ENCODE measurements at regions of chr4 and their contacts with region 1.

Region 1: GRCh38 chr4:90824266-90825195 is 697.3 kb downstream of the CCSER1 start:
- DNase-seq: no peak
- ATAC-seq: no peak
- H3K4me3 ChIP-seq: no peak overlapping the region
- H3K27ac ChIP-seq: no peak overlapping the region
- H3K4me1 ChIP-seq: no peaks in the 10 kb centered on the region
- H3K27me3 ChIP-seq: no peaks in the 10 kb centered on the region
- CTCF ChIP-seq: no peak
- POLR2A ChIP-seq: no peak
- RAD21 ChIP-seq: no peak

Region 2: GRCh38 chr4:90780193-90780592 is 44.3 kb before region 1 on chr4:
- CTCF ChIA-PET with region 1: no interaction called
- POLR2A ChIA-PET with region 1: no interaction called
- dilution Hi-C with region 1: no loop called
- in situ Hi-C with region 1: no loop called
- intact Hi-C with region 1: loop called (anchors 2 kb)
- DNase-seq: no peak
- ATAC-seq: no peak
- H3K4me3 ChIP-seq: no peak overlapping the region
- H3K27ac ChIP-seq: no peak overlapping the region
- H3K4me1 ChIP-seq: no peaks in the 10 kb centered on the region
- H3K27me3 ChIP-seq: no peaks in the 10 kb centered on the region
- CTCF ChIP-seq: no peak
- POLR2A ChIP-seq: no peak
- RAD21 ChIP-seq: no peak

Region 3: DNA sequence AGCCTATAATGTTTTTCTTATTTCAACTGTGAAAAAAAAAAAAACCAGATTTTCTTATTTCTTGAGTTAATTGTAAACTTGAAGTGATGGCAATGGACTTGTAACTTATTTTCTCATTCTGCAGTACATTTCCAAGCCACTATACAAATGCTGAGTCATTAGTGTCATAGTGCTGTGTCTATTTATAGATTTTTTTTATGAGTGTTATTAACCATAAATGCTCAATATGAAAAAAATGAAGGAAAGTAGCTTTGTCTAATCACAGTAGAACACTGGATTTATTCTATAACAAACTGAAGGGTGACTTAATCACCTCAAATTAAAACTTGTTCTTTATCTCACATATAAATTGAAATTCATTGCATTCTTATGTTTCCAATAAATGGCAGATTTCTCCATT is 21.2 kb after region 1 on chr4:
- CTCF ChIA-PET with region 1: no interaction called
- POLR2A ChIA-PET with region 1: no interaction called
- dilution Hi-C with region 1: no loop called
- in situ Hi-C with region 1: no loop called
- intact Hi-C with region 1: no loop called
- DNase-seq: no peak
- ATAC-seq: no peak
- H3K4me3 ChIP-seq: no peak overlapping the region
- H3K27ac ChIP-seq: no peak overlapping the region
- H3K4me1 ChIP-seq: no peaks in the 10 kb centered on the region
- H3K27me3 ChIP-seq: no peaks in the 10 kb centered on the region
- CTCF ChIP-seq: no peak
- POLR2A ChIP-seq: no peak
- RAD21 ChIP-seq: no peak

Measured in IMR-90 (cell line).